T-cell (primary cell): ENCODE measurements at regions of chr5 and their contacts with region 1.

Region 1: DNA sequence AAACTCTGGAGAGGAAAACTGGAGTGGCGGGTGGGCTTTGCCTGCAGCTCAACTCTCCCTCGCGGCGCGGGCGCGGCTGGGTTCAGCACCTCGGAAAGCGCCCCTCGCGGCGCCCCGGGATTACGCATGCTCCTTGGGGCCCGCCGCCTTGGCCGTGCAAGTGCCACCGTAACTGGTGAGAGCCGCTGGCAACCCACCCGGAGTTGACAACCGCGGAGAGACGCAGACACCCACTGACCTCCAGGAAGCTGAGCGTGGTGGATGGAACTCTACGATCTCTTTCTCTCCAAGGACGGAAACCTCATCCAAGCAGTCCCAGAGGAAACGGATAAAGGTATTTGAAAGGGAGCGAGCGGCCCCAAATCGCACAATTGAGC is 194 bp upstream of the RXFP3 start:
- DNase-seq: peak in 25 of 35 experiments; percentile 2 to 44 (median 12)
- ATAC-seq: peak in 1 of 4 experiments; percentile 63
- H3K4me3 ChIP-seq: peak overlapping the region in 1 of 2 donors; percentile 35
- H3K4me3 Mint-ChIP-seq: no peak overlapping the region
- H3K27ac ChIP-seq: no peak overlapping the region
- H3K27ac Mint-ChIP-seq: no peak overlapping the region
- H3K4me1 ChIP-seq: peaks cover 0 to 7% of the 10 kb centered on the region in 2 experiments
- H3K4me1 Mint-ChIP-seq: peaks cover 0 to 7% (median 6%) of the 10 kb centered on the region in 3 donors
- H3K27me3 ChIP-seq: peaks cover 12 to 33% of the 10 kb centered on the region in 2 experiments
- H3K27me3 Mint-ChIP-seq: peaks cover 40 to 57% of the 10 kb centered on the region in 2 donors

Region 2: DNA sequence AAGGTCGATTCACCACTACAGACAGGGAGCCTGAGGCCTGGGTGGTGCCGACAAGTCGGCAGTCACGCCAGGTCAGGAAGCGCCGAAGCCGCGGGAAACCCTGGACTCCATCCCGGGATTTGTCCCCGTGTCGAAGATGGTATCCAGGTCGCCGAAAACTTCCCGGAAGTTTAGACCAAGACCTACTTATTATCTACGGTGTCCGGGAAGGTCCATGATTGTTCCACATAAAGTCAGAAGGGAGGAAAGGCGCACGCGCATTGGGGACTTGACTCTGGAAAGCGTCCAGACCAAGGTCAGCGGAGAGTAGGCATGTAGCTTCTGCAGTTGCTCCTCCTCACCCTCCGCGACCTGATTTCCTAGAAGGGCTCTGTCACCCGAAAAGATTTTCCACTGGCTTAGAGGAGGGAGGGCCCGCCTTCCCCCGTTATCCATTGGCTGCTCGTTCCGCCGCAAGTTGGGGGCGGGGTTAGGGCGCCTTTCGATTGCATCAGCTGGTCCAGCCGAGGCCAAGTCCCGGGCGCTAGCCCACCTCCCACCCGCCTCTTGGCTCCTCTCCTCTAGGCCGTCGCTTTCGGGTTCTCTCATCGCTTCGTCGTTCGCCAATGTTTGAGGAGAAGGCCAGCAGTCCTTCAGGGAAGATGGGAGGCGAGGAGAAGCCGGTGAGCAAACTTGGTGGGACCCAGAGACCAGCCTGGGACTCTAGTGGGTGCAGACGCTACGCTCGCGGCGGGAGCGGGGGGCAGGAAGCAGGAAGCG is 495.3 kb before region 1 on chr5 and contains the start of gene TARS1:
- CTCF ChIA-PET with region 1: interaction called, 5 to 40 read pairs
- POLR2A ChIA-PET with region 1: no interaction called
- DNase-seq: peak; percentile 81 to 94 (median 88)
- ATAC-seq: peak; percentile 93 to 95 (median 94)
- H3K4me3 ChIP-seq: peak within 1 kb of the TSS; percentile 69 to 95
- H3K4me3 Mint-ChIP-seq: no peak within 1 kb of the TSS
- H3K27ac ChIP-seq: peak within 1 kb of the TSS; percentile 67
- H3K27ac Mint-ChIP-seq: no peak within 1 kb of the TSS
- H3K4me1 ChIP-seq: peaks cover 20 to 23% of the 10 kb centered on the region in 2 experiments
- H3K4me1 Mint-ChIP-seq: peaks cover 27 to 35% (median 32%) of the 10 kb centered on the region in 3 donors
- H3K27me3 ChIP-seq: no peaks in the 10 kb centered on the region
- H3K27me3 Mint-ChIP-seq: no peaks in the 10 kb centered on the region
- total RNA-seq, gene TARS1: 26.7 to 134 (median 119) TPM